WTC11 (cell line): ENCODE measurements at regions of chr5 and their contacts with region 1.

Region 1: DNA sequence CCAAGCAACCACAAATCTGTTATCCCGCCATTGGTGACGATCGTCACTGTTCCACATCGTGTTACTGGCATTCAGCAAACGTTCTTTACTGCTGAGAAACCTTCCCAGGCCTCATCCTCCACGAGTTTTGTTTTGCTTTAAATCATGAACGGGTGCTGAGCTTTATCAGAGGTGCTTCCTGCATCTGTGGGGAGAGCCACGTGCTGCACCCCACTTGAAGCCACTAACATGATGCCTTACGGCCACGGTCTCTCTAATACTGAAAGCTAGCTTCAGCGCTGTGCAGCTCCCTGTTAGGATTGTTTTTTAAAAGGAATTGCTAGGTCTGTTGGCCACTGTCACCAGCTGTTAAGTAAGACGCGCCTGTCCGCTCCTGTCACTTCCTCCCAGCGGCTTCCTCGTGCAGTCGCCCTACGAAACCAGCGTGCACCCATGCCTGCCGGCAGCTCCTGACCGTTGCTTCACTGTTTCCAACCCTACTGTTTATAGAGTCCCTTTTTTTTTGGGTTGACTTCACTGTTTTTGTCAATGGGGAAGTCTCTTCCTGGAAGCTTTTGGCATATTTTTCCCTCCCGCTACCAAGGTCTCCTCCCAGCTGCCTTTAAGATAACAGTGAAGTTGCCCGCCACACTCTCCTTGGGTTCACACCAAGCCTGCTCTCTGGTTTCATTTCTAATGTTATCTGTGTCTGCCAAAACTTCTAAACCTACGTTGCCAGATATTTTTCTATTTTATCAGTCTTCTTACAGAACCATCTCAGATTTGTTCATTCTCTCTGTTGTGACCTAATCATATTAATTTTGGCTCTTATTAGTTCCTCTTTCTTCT is 20.3 kb downstream of the LPCAT1 start:
- DNase-seq: no peak
- ATAC-seq: no peak
- H3K4me3 Mint-ChIP-seq: no peak overlapping the region
- H3K27ac Mint-ChIP-seq: peak overlapping the region; percentile 66
- H3K4me1 Mint-ChIP-seq: peaks cover 59% of the 10 kb centered on the region
- H3K27me3 Mint-ChIP-seq: no peaks in the 10 kb centered on the region
- CTCF ChIP-seq: no peak

Region 2: GRCh38 chr5:1479581-1480188 is 23.8 kb before region 1 on chr5:
- CTCF ChIA-PET with region 1: interaction called, 15 read pairs
- POLR2A ChIA-PET with region 1: no interaction called
- DNase-seq: peak; percentile 65
- ATAC-seq: peak; percentile 61
- H3K4me3 Mint-ChIP-seq: no peak overlapping the region
- H3K27ac Mint-ChIP-seq: peak overlapping the region; percentile 93; the same call in 1 of the 2 replicates
- H3K4me1 Mint-ChIP-seq: peaks cover 5% of the 10 kb centered on the region
- H3K27me3 Mint-ChIP-seq: no peaks in the 10 kb centered on the region
- CTCF ChIP-seq: peak; percentile 72

Region 3: DNA sequence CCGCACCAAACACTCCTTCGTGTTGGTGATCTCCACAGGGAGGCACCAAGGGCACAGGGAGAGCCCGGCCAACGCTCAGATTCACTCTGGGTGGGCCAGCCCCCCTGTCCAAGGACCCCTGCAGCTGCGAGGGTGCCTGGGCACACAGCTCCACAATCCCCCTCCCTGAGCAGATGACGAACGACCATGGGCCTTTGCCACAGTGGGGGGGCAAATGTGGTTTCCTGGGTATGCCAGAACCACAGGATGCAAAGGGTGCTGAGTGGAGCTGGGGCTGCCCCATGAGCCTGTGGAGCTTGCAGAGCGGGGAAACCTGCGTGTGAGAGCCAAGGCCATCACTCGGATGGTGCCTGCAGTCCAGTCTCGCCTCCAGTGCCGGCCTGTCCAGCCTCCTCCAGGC is 10.7 kb before region 1 on chr5:
- CTCF ChIA-PET with region 1: interaction called, 10 read pairs
- POLR2A ChIA-PET with region 1: interaction called, 3 read pairs
- DNase-seq: no peak
- ATAC-seq: no peak
- H3K4me3 Mint-ChIP-seq: no peak overlapping the region
- H3K27ac Mint-ChIP-seq: no peak overlapping the region
- H3K4me1 Mint-ChIP-seq: no peaks in the 10 kb centered on the region
- H3K27me3 Mint-ChIP-seq: no peaks in the 10 kb centered on the region
- CTCF ChIP-seq: no peak

Region 4: GRCh38 chr5:1536322-1536845 is 32.9 kb after region 1 on chr5:
- CTCF ChIA-PET with region 1: no interaction called
- POLR2A ChIA-PET with region 1: no interaction called
- DNase-seq: no peak
- ATAC-seq: no peak
- H3K4me3 Mint-ChIP-seq: no peak overlapping the region
- H3K27ac Mint-ChIP-seq: no peak overlapping the region
- H3K4me1 Mint-ChIP-seq: no peaks in the 10 kb centered on the region
- H3K27me3 Mint-ChIP-seq: no peaks in the 10 kb centered on the region
- CTCF ChIP-seq: no peak

Region 5: DNA sequence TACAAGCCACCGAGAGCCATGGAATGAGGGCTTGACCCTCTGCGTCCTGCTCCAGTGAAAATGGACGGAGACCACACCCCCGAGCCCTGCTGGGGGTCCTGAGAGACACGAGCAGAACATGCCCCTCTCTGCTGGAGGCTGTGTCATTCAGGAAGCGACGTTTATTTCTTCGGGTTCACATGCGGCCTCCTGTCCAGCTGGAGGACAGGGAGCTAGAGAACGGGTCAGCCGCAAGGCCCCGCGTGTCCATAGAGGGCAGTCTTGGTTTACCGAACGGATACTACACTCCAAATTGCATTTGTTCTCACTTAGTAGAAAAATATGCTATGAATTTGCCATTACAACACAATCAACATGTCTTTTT is 260.1 kb after region 1 on chr5:
- CTCF ChIA-PET with region 1: no interaction called
- POLR2A ChIA-PET with region 1: no interaction called
- DNase-seq: peak; percentile 70
- ATAC-seq: peak; percentile 79
- H3K4me3 Mint-ChIP-seq: no peak overlapping the region
- H3K27ac Mint-ChIP-seq: no peak overlapping the region
- H3K4me1 Mint-ChIP-seq: peaks cover 11% of the 10 kb centered on the region
- H3K27me3 Mint-ChIP-seq: no peaks in the 10 kb centered on the region; the same call in 1 of the 2 replicates
- CTCF ChIP-seq: peak; percentile 36